ENCODE measurements at regions of chr15 and their contacts with region 1.

Region 1: DNA sequence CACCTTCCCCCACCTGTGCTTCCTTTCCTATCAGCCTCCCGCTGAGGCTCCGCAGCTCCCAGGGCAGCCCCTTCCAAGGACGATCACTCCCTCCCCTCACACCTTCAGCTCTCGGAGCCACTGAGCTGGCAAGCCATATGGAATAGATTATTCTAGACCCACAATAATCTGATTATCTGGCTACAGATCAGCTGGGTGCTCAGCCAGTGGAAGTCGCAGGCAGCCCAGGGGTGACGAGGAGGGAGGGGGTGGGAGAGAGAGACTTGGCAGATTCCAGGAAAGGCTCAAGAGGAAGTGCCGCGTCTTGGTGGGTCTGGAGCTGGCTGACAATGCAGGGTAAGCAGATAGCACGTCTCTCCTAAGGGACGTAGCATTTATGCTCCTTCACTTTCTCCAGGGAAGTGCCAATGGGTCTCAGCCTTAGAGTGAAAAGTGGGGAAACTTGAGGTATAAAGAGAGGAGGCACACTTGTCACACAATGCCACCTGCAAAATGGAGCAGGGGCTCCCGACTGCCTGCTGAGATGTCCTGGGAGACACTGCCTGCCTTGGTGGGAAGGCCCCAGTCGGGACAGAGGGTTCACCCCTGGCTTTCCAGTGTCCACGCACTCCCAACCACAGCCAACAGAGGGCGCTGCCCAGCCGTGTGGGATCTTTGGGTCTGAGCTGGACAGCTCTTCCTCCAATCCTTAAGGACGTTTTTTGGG is 9.4 kb upstream of the MESP1 start:
- DNase-seq: no peak
- H3K4me3 ChIP-seq: no peak overlapping the region
- H3K27me3 ChIP-seq: no peaks in the 10 kb centered on the region
- CTCF ChIP-seq: peak; percentile 98

Region 2: GRCh38 chr15:89740137-89740536 is 20.3 kb before region 1 on chr15:
- CTCF ChIA-PET with region 1: interaction called, 29 read pairs
- POLR2A ChIA-PET with region 1: no interaction called
- DNase-seq: peak; percentile 14
- H3K4me3 ChIP-seq: no peak overlapping the region
- H3K27me3 ChIP-seq: peaks cover 5% of the 10 kb centered on the region
- CTCF ChIP-seq: peak; percentile 87

Region 3: GRCh38 chr15:89776274-89777072 is 16.0 kb after region 1 on chr15 and contains the start of gene MESP2:
- CTCF ChIA-PET with region 1: interaction called, 50 read pairs
- POLR2A ChIA-PET with region 1: no interaction called
- DNase-seq: no peak
- H3K4me3 ChIP-seq: peak within 1 kb of the TSS; percentile 40
- H3K27me3 ChIP-seq: no peaks in the 10 kb centered on the region
- CTCF ChIP-seq: peak; percentile 45
- polyA plus RNA-seq, gene MESP2: 0.28 and 0.39 TPM in 2 replicates

Region 4: DNA sequence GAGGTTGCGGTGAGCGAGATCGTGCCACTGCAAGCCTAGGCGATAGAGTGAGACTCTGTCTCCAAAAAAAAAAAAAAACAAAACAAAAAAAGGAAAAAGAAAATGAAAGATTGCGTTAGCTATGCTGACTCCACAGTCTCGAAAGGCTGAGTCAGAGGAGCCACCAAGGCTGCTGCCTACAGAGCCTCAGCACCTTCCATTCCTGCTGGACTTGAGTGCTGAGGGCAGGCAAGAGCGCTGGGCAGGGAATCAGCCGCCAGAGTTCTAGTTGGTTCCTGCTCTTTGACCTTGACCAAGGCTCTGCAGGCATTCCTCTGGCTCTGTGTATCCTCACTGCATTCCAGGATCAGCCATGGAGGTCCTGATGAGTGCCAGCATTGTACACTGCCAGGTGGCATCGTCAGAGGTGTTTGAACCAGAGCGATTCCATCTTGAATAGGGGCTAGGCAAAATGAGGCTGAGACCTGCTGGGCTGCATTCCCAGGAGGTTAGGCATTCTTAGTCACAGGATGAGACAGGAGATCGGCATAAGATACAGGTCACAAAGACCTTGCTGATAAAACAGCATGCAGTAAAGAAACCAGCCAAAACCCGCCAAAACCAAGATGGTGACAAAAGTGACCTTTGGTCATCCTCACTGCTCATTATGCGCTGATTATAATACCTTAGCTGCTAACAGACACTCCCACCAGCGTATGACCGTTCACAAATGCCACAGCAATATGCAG is 21.6 kb after region 1 on chr15:
- CTCF ChIA-PET with region 1: interaction called, 11 read pairs
- POLR2A ChIA-PET with region 1: no interaction called
- DNase-seq: no peak
- H3K4me3 ChIP-seq: no peak overlapping the region
- H3K27me3 ChIP-seq: no peaks in the 10 kb centered on the region
- CTCF ChIP-seq: no peak

Region 5: DNA sequence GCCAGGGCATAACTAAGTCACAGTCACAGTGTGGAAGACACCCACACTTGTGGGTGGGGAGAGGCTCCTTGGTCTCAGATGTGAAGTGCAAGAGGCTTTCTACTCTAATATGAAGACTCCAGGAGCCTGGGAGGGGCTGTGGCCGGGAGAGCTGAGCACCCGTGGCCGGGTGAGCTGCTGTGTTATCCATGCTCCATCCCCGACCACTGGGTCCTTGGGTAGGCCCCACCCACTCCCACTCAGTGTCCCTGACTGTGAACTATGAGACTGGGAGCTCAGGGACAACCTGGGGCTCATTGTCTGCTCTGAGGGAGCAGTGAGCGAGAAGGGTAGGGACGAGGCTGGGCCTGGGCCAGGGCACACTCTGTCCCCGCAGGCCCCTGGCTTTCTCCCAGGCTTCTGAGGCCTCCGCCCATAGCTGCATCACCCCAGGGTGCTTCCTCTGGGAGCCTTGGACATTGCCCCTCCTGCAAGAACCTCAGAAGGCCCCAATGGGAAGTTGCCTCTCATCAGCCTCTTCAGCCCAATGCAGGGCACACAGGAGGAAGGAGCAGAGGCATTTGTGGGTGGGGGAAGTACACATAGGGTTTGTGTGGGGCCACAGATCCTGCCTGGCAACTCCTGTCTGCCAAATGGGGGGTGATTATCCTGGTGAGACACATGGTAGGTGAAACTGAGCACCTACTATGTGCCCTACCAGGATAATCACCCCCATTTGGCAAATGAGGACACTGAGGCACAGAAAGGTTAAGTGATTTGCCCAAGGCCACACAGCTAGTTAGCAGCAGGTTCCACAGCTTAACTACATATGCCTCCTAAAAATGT is 51.8 kb after region 1 on chr15:
- CTCF ChIA-PET with region 1: interaction called, 13 read pairs
- POLR2A ChIA-PET with region 1: interaction called, 3 read pairs
- DNase-seq: no peak
- H3K4me3 ChIP-seq: peak overlapping the region; percentile 80
- H3K27me3 ChIP-seq: no peaks in the 10 kb centered on the region
- CTCF ChIP-seq: no peak

Region 6: GRCh38 chr15:89837134-89837833 is 76.8 kb after region 1 on chr15:
- CTCF ChIA-PET with region 1: interaction called, 11 read pairs
- POLR2A ChIA-PET with region 1: no interaction called
- DNase-seq: no peak
- H3K4me3 ChIP-seq: no peak overlapping the region
- H3K27me3 ChIP-seq: no peaks in the 10 kb centered on the region
- CTCF ChIP-seq: no peak

Region 7: DNA sequence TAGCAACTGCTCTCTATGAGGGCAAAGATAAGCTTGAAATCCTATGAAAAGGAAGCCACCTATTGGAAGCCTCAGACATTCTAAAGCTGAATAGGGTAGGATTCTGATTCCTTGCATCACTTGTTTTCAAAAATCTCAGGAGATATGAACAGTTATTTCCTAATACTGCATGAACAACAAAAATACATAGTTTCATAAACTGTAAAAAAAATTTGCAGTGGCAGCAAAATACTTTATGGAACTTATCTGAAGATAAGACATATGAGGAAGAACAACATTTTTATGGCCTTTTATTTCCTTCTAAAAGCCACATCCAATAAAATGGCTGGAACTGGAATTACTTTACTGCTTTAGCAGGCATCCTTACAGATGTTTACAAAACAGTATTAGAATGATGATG is 103.5 kb after region 1 on chr15:
- CTCF ChIA-PET with region 1: interaction called, 15 read pairs
- POLR2A ChIA-PET with region 1: no interaction called
- DNase-seq: no peak
- H3K4me3 ChIP-seq: no peak overlapping the region
- H3K27me3 ChIP-seq: no peaks in the 10 kb centered on the region
- CTCF ChIP-seq: peak; percentile 20; the same call in 1 of the 2 replicates

Measured in BJ (cell line).